PC-3 (cell line): ENCODE measurements at regions of chr3 and their contacts with region 1.

Region 1: DNA sequence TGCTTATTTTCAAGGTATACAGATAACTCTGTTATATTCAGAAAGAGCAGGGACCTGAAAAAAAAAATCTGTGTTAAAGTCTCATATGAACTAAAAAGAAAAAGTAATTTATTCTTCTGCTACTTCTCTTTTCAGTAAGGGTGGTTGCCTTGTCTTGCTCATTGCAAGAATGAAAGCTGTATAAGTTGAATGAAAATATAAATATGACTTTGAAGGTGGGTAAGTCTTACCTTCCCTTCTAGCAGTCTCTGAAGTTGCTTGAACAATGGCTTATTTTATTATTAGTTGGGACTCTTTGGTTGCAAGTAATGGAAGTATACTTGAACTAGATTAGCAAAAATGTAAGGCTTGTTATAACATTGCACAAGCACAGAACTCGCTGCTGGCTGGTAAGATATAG is 1554.9 kb downstream of the SI start:
- DNase-seq: no peak
- ATAC-seq: no peak
- H3K4me3 ChIP-seq: no peak overlapping the region
- H3K27ac ChIP-seq: no peak overlapping the region
- H3K4me1 ChIP-seq: no peaks in the 10 kb centered on the region
- H3K27me3 ChIP-seq: no peaks in the 10 kb centered on the region
- CTCF ChIP-seq: no peak

Region 2: DNA sequence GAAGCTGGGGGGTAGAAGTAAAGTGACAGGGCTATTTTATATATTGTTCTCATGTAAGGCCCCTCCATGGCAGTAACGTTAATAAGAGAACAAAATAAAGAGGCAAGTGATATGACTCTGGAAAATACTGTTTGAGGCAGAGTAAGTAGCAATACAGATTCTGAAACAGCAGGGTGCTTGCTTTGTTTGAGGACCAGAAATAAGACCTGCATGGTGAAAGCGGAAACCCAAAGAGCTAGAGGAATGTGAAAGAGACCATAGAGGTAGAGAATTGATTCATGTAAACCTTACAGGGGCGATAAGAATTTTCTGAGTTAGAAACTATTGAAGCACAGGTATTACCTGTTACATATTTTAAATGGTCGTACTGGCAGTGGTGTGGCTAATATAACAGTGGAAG is 37.8 kb after region 1 on chr3:
- CTCF ChIA-PET with region 1: no interaction called
- POLR2A ChIA-PET with region 1: interaction called, 18 read pairs
- intact Hi-C with region 1: no loop called
- DNase-seq: no peak
- ATAC-seq: no peak
- H3K4me3 ChIP-seq: no peak overlapping the region
- H3K27ac ChIP-seq: no peak overlapping the region
- H3K4me1 ChIP-seq: peaks cover 14% of the 10 kb centered on the region
- H3K27me3 ChIP-seq: no peaks in the 10 kb centered on the region
- CTCF ChIP-seq: no peak